Activated naive CD4-positive, alpha-beta T cell treated with anti-CD3 and anti-CD28 coated beads for 36 hours (primary cell): ENCODE measurements at regions of chr1 and their contacts with region 1.

Region 1: GRCh38 chr1:1307908-1308755 is at the starts of genes ACAP3 and PUSL1:
- DNase-seq: peak; percentile 88
- H3K4me3 Mint-ChIP-seq: peak within 1 kb of the TSS; percentile 79
- H3K27ac Mint-ChIP-seq: peak within 1 kb of the TSS; percentile 77
- H3K4me1 Mint-ChIP-seq: peaks cover 23% of the 10 kb centered on the region
- H3K27me3 Mint-ChIP-seq: no peaks in the 10 kb centered on the region
- total RNA-seq, gene ACAP3: 24.1 to 25.3 TPM
- total RNA-seq, gene PUSL1: 17.0 to 17.6 TPM

Region 2: GRCh38 chr1:1033009-1033587 is 275.0 kb before region 1 on chr1:
- CTCF ChIA-PET with region 1: no interaction called
- intact Hi-C with region 1: loop called (anchors 2 kb)
- DNase-seq: peak; percentile 97
- H3K4me3 Mint-ChIP-seq: peak overlapping the region; percentile 45
- H3K27ac Mint-ChIP-seq: no peak overlapping the region
- H3K4me1 Mint-ChIP-seq: peaks cover 9% of the 10 kb centered on the region
- H3K27me3 Mint-ChIP-seq: peaks cover 9% of the 10 kb centered on the region

Region 3: GRCh38 chr1:1273512-1274298 is 34.4 kb before region 1 on chr1 and contains the start of gene UBE2J2:
- CTCF ChIA-PET with region 1: no interaction called
- intact Hi-C with region 1: loop called (anchors 1 kb)
- DNase-seq: peak; percentile 95
- H3K4me3 Mint-ChIP-seq: peak within 1 kb of the TSS; percentile 85
- H3K27ac Mint-ChIP-seq: peak within 1 kb of the TSS; percentile 80
- H3K4me1 Mint-ChIP-seq: peaks cover 39% of the 10 kb centered on the region
- H3K27me3 Mint-ChIP-seq: no peaks in the 10 kb centered on the region
- total RNA-seq, gene UBE2J2: 48.5 to 49.7 TPM

Region 4: DNA sequence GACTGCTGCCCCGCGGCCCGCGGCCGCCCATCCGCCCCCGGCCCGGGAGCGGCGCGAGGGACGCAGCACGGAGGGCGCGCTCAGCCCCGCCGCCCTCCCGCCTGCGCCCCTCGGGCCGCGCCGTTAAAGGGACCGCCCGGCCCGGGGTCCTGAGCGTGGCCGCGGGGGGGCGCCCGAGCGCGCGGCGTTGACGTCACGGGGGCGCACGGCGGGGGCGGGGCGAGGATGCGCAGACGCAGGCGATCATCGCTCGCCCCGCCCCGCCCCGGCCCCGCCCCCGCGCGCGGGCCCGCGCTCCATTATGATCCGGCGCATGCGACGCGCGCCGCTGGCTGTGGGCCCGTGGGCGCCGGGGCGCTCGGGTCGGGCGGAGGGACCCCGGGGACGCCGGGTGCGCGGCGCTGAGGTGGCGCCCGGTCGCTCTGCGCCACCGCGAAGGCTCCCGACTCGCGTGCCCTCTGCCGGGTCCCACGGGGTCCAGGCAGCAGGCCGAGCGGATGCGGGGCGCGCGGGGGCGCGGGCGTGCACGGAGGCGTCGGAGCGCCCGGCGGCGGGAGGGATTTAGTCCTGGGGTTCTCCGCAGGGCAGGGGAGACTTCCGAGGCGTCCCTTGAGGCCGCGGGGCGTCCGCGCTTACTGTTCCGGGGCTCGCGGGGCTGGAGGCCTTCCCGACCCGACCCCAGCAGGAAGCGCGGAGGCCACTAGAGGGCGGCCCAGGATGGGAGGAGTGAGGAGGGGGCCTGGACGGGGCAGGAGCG is 41.3 kb after region 1 on chr1 and contains the start of gene DVL1:
- CTCF ChIA-PET with region 1: interaction called, 5 read pairs
- intact Hi-C with region 1: loop called (anchors 1 kb)
- DNase-seq: peak; percentile 79
- H3K4me3 Mint-ChIP-seq: peak within 1 kb of the TSS; percentile 76
- H3K27ac Mint-ChIP-seq: no peak within 1 kb of the TSS
- H3K4me1 Mint-ChIP-seq: peaks cover 28% of the 10 kb centered on the region
- H3K27me3 Mint-ChIP-seq: peaks cover 12% of the 10 kb centered on the region
- total RNA-seq, gene DVL1: 33.4 to 35.0 TPM